ENCODE measurements at regions of chrX and their contacts with region 1.

Region 1: DNA sequence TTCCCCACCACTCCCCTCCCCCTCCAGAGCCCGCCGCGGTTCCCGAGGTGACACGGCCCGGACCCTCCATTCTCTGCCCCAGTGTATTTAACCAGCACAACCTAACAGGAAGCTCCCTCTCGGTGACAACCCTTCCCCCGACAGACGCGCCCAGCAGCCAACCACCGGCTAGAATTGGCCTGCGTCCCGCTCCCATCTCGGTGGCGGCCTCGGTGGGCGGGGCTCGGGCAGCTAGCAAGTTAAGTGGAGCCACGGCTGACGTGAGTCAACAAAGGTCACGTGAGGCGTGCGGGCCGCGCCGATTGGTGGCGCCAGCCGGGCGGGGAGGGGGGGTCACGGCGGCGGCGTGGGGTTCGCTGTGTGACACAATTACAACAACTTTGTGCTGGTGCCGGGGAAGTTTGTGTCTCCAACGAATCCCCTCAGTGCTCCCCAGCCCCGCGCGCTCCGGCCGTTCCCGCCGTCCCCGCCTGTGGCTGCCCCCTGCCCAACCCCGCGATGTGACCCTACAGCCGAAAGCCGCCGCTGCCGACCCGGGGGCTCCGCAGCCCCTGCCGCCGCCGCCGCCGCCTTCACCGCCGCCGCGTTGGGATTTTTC is at the start of gene KDM6A:
- DNase-seq: peak; percentile 97
- ATAC-seq: peak; percentile 91
- H3K4me3 Mint-ChIP-seq: peak within 1 kb of the TSS; percentile 95
- H3K27ac Mint-ChIP-seq: peak within 1 kb of the TSS; percentile 99
- H3K4me1 Mint-ChIP-seq: peaks cover 9% of the 10 kb centered on the region
- H3K27me3 Mint-ChIP-seq: no peaks in the 10 kb centered on the region
- CTCF ChIP-seq: no peak
- total RNA-seq, gene KDM6A: 18.9 to 21.1 TPM

Region 2: DNA sequence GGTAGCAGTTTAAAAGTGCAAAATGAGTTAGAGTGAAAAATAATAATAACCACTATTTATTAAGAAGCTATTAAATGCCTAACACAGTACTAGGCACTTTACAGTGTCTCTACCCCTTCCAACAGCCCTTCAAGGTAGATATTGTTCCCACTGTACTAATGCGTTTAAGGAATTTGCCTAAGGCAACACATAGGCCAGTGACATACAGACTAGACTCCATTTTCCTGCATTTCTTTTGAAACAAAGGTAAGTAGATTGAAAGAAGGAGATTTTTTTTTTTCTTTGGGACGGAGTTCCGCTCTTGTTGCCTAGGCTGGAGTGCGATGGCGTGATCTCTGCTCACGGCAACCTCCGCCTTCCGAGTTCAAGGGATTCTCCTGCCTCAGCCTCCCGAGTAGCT is 24.7 kb before region 1 on chrX:
- CTCF ChIA-PET with region 1: no interaction called
- POLR2A ChIA-PET with region 1: no interaction called
- intact Hi-C with region 1: no loop called
- DNase-seq: no peak
- ATAC-seq: no peak
- H3K4me3 Mint-ChIP-seq: no peak overlapping the region
- H3K27ac Mint-ChIP-seq: no peak overlapping the region
- H3K4me1 Mint-ChIP-seq: no peaks in the 10 kb centered on the region
- H3K27me3 Mint-ChIP-seq: no peaks in the 10 kb centered on the region
- CTCF ChIP-seq: no peak

Region 3: DNA sequence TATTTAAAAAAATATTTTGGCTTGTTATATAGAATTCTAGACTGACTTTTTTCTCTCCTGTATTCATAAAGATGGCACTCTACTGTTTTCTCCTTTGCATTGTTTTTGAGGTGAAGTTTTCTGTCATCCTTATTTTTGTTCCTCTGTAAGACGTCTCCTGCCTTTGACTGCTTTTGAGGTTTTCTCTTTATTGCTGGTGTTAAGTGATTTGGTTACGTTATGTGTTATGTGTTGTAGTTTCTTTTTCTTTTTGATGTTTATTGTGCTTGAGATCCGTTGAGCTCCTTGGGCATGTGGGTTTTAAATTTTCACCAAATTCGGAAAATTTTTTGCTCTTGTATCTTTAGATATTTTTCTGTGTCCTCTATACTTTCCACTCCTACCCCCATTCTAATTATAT is 50.1 kb after region 1 on chrX:
- CTCF ChIA-PET with region 1: no interaction called
- POLR2A ChIA-PET with region 1: no interaction called
- intact Hi-C with region 1: loop called (anchors 10 kb)
- DNase-seq: no peak
- ATAC-seq: peak; percentile 45
- H3K4me3 Mint-ChIP-seq: peak overlapping the region; percentile 57
- H3K27ac Mint-ChIP-seq: peak overlapping the region; percentile 79
- H3K4me1 Mint-ChIP-seq: peaks cover 52% of the 10 kb centered on the region
- H3K27me3 Mint-ChIP-seq: no peaks in the 10 kb centered on the region
- CTCF ChIP-seq: no peak

Region 4: DNA sequence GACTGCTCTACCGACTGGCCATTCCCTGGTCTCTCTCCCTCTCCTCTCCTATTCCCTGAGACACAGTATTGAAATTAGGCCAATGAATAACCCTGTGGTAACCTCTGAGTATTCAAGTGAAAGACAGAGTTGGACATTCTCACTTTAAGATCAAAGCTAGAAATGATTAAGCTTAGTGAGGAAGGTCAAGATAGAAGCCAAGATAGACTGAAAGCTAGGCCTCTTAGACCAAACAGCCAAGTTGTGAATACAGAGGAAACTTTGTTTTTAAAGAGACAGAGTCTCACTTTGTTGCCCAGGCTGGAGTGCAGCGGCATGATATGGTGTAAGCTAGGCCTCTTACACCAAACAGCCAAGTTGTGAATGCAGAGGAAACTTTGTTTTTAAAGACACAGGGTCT is 64.7 kb after region 1 on chrX:
- CTCF ChIA-PET with region 1: no interaction called
- POLR2A ChIA-PET with region 1: no interaction called
- intact Hi-C with region 1: no loop called
- DNase-seq: no peak
- ATAC-seq: no peak
- H3K4me3 Mint-ChIP-seq: no peak overlapping the region
- H3K27ac Mint-ChIP-seq: peak overlapping the region; percentile 67
- H3K4me1 Mint-ChIP-seq: peaks cover 54% of the 10 kb centered on the region
- H3K27me3 Mint-ChIP-seq: no peaks in the 10 kb centered on the region
- CTCF ChIP-seq: no peak

Region 5: GRCh38 chrX:45046417-45046816 is 173.5 kb after region 1 on chrX:
- CTCF ChIA-PET with region 1: no interaction called
- POLR2A ChIA-PET with region 1: no interaction called
- intact Hi-C with region 1: no loop called
- DNase-seq: no peak
- ATAC-seq: no peak
- H3K4me3 Mint-ChIP-seq: no peak overlapping the region
- H3K27ac Mint-ChIP-seq: no peak overlapping the region
- H3K4me1 Mint-ChIP-seq: peaks cover 8% of the 10 kb centered on the region
- H3K27me3 Mint-ChIP-seq: no peaks in the 10 kb centered on the region
- CTCF ChIP-seq: no peak

Region 6: DNA sequence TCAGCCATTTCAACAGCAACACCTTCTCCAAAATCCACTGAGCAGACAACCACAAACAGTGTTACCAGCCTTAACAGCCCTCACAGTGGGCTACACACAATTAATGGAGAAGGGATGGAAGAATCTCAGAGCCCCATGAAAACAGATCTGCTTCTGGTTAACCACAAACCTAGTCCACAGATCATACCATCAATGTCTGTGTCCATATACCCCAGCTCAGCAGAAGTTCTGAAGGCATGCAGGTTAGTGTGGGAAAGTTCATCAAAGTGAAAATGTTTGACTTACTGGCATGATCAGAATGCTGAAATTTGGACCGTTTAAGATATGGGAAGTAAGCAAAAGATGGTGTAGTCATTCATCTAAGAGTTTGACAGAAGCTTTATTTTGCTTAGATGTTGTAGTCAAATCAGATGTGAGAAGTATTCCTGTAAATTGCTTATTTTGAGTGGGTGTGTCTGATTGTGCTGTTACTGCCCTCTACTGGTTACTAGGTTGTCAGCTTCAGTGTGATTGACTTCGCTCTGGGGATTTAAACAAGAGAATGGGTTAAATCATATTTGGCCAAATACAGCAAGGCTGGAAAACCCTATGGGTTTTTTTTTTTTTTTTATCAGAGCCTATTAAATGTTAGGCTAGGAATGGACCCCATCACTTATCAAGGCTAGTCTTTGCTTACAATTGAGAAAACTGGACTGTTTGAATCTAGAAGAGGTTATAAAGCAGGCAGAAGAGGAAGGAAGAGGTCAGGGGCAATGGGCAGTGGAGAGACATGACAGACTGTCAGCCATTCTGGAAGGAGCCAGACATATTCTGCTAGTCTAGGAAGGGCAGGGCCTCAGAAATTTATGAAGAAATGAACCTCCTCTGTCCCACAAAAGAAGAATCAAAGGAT is 197.4 kb after region 1 on chrX:
- CTCF ChIA-PET with region 1: no interaction called
- POLR2A ChIA-PET with region 1: no interaction called
- intact Hi-C with region 1: loop called (anchors 5 kb)
- DNase-seq: peak; percentile 20
- ATAC-seq: peak; percentile 64
- H3K4me3 Mint-ChIP-seq: no peak overlapping the region
- H3K27ac Mint-ChIP-seq: peak overlapping the region; percentile 44
- H3K4me1 Mint-ChIP-seq: peaks cover 52% of the 10 kb centered on the region
- H3K27me3 Mint-ChIP-seq: no peaks in the 10 kb centered on the region
- CTCF ChIP-seq: peak; percentile 49

Measured in activated CD8-positive, alpha-beta T cell treated with anti-CD3 and anti-CD28 coated beads for 36 hours (primary cell).